T-cell (primary cell): ENCODE measurements at regions of chr7 and their contacts with region 1.

Region 1: GRCh38 chr7:129825496-129826267 is 127.1 kb downstream of the UBE2H start:
- DNase-seq: peak; percentile 58 to 92 (median 83)
- ATAC-seq: peak; percentile 82 to 92 (median 83)
- H3K4me3 ChIP-seq: peak overlapping the region; percentile 79 to 82
- H3K4me3 Mint-ChIP-seq: peak overlapping the region; percentile 80 to 86 (median 84)
- H3K27ac ChIP-seq: no peak overlapping the region
- H3K27ac Mint-ChIP-seq: no peak overlapping the region
- H3K4me1 ChIP-seq: peaks cover 3 to 30% of the 10 kb centered on the region in 2 experiments
- H3K4me1 Mint-ChIP-seq: peaks cover 20 to 21% (median 21%) of the 10 kb centered on the region in 3 donors
- H3K27me3 ChIP-seq: peaks cover 0 to 13% of the 10 kb centered on the region in 2 experiments
- H3K27me3 Mint-ChIP-seq: peaks cover 0 to 1% of the 10 kb centered on the region in 2 donors

Region 2: GRCh38 chr7:129343099-129343700 is 482.5 kb before region 1 on chr7:
- CTCF ChIA-PET with region 1: interaction called in 1 of 2 experiments, 13 read pairs
- POLR2A ChIA-PET with region 1: no interaction called
- DNase-seq: peak in 4 of 35 experiments; percentile 3 to 63 (median 8)
- ATAC-seq: no peak
- H3K4me3 ChIP-seq: no peak overlapping the region
- H3K4me3 Mint-ChIP-seq: no peak overlapping the region
- H3K27ac ChIP-seq: no peak overlapping the region
- H3K27ac Mint-ChIP-seq: no peak overlapping the region
- H3K4me1 ChIP-seq: no peaks in the 10 kb centered on the region
- H3K4me1 Mint-ChIP-seq: peaks cover 10 to 21% (median 18%) of the 10 kb centered on the region in 3 donors
- H3K27me3 ChIP-seq: no peaks in the 10 kb centered on the region
- H3K27me3 Mint-ChIP-seq: no peaks in the 10 kb centered on the region

Region 3: DNA sequence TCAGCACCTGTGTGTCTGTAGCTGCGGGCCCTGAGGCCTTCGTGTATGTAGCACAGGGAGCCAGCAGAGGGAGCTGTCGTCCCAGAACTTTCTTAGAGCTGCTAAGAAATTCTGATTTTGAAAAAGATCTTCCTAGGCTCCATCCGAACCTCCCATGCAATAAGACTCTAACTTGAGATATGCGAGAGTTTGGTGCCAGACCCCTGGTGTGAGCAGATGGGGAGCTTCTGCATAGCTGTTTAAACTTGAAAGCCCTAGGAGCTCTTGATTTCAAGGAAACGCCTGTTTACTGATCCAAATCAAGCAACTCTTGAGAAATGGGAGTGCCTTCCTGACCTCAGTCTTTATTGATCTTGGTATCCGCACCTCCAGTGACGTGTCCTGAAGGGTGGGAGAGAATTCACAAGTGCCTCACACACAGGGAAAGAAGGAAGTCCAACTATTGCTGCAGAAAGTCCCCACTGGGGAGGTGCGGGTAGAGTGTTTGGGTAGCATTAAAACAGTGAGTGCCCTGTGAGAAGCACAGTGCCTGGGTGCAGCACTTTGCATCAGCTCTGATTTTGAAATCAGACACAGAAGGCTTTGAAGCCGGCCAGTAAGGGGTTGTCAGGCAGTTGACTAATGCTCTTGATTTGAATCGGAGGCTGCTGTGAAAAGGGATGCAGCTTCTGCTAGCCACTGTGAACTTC is 457.8 kb before region 1 on chr7:
- CTCF ChIA-PET with region 1: interaction called, 5 to 13 read pairs
- POLR2A ChIA-PET with region 1: no interaction called
- DNase-seq: peak; percentile 19 to 83 (median 65)
- ATAC-seq: peak; percentile 83 to 88 (median 86)
- H3K4me3 ChIP-seq: peak overlapping the region in 1 of 2 donors; percentile 2
- H3K4me3 Mint-ChIP-seq: peak overlapping the region; percentile 11 to 65 (median 55)
- H3K27ac ChIP-seq: no peak overlapping the region
- H3K27ac Mint-ChIP-seq: peak overlapping the region in 1 of 2 donors; percentile 12
- H3K4me1 ChIP-seq: peaks cover 4 to 11% of the 10 kb centered on the region in 2 experiments
- H3K4me1 Mint-ChIP-seq: peaks cover 13 to 22% (median 20%) of the 10 kb centered on the region in 3 donors
- H3K27me3 ChIP-seq: no peaks in the 10 kb centered on the region
- H3K27me3 Mint-ChIP-seq: no peaks in the 10 kb centered on the region

Region 4: DNA sequence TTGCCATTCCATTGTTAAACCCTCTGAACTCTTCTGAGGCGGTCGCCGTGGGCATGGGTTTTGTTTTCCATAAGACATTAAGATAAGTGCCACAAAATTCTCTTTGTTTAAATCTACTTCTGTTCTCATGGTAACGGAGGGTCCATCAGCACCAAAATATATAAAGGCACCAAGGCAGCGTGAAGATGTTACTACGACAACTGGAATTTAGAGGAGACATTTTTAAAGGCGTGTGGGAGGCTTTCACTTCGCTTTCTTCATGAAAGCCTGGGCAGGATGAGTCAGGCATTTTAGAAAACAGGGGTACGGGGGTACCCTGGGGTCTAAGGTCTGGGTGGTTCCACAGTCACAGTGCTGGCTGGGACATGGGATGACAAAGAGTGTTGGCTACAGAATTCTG is 289.4 kb before region 1 on chr7:
- CTCF ChIA-PET with region 1: no interaction called
- POLR2A ChIA-PET with region 1: interaction called in 1 of 2 experiments, 17 read pairs
- DNase-seq: peak in 3 of 35 experiments; percentile 3 to 26 (median 15)
- ATAC-seq: peak in 2 of 4 experiments; percentile 24 to 32
- H3K4me3 ChIP-seq: no peak overlapping the region
- H3K4me3 Mint-ChIP-seq: peak overlapping the region; percentile 10 to 64 (median 54)
- H3K27ac ChIP-seq: no peak overlapping the region
- H3K27ac Mint-ChIP-seq: peak overlapping the region; percentile 60 to 77
- H3K4me1 ChIP-seq: peaks cover 2 to 20% of the 10 kb centered on the region in 2 experiments
- H3K4me1 Mint-ChIP-seq: peaks cover 8 to 14% (median 11%) of the 10 kb centered on the region in 3 donors
- H3K27me3 ChIP-seq: peaks cover 0 to 4% of the 10 kb centered on the region in 2 experiments
- H3K27me3 Mint-ChIP-seq: peaks cover 0 to 2% of the 10 kb centered on the region in 2 donors

Region 5: GRCh38 chr7:129730159-129730558 is 95.5 kb before region 1 on chr7:
- CTCF ChIA-PET with region 1: interaction called in 1 of 2 experiments, 10 read pairs
- POLR2A ChIA-PET with region 1: no interaction called
- DNase-seq: no peak
- ATAC-seq: no peak
- H3K4me3 ChIP-seq: no peak overlapping the region
- H3K4me3 Mint-ChIP-seq: no peak overlapping the region
- H3K27ac ChIP-seq: no peak overlapping the region
- H3K27ac Mint-ChIP-seq: no peak overlapping the region
- H3K4me1 ChIP-seq: no peaks in the 10 kb centered on the region
- H3K4me1 Mint-ChIP-seq: no peaks in the 10 kb centered on the region
- H3K27me3 ChIP-seq: no peaks in the 10 kb centered on the region
- H3K27me3 Mint-ChIP-seq: no peaks in the 10 kb centered on the region

Region 6: DNA sequence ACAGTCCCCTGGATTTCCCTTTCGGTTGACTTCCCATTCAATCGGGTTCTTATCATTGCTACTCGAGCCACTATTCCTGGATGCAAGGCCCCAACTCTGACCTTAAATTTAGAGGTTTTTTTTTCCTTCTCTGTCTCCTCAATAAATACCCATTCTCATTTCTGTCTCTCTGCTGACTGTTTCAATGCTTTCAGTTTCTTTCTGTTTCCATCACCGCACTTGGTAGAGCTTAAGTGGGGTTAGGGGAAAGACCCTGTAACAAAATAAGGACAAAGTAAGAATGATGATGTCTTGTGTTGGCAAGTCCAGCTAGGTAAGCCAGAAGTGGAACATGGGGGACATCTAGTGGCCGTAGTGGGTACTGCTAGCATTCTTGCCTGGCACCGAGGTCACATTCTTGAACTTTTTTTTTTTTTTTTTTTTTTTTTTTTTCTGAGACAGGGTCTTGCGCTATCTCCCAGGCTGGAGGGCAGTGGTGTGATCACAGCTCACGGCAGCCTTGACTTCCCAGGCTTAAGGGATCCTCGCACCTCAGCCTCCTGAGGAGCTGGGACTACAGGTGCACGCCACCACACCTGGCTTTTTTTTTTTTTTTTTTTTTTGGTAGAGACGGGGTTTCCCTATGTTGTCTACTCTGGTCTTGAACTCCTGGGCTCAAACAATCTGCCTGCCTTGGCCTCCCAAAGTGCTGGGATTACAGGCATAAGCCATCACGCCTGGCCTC is 185.2 kb after region 1 on chr7:
- CTCF ChIA-PET with region 1: interaction called in 1 of 2 experiments, 12 read pairs
- POLR2A ChIA-PET with region 1: no interaction called
- DNase-seq: peak; percentile 62 to 92 (median 80)
- ATAC-seq: peak; percentile 67 to 84 (median 75)
- H3K4me3 ChIP-seq: no peak overlapping the region
- H3K4me3 Mint-ChIP-seq: no peak overlapping the region
- H3K27ac ChIP-seq: no peak overlapping the region
- H3K27ac Mint-ChIP-seq: no peak overlapping the region
- H3K4me1 ChIP-seq: no peaks in the 10 kb centered on the region
- H3K4me1 Mint-ChIP-seq: peaks cover 2 to 5% (median 2%) of the 10 kb centered on the region in 3 donors
- H3K27me3 ChIP-seq: no peaks in the 10 kb centered on the region
- H3K27me3 Mint-ChIP-seq: no peaks in the 10 kb centered on the region